Common myeloid progenitor, CD34-positive (primary cell): ENCODE measurements at regions of chr22 and their contacts with region 1.

Region 1: DNA sequence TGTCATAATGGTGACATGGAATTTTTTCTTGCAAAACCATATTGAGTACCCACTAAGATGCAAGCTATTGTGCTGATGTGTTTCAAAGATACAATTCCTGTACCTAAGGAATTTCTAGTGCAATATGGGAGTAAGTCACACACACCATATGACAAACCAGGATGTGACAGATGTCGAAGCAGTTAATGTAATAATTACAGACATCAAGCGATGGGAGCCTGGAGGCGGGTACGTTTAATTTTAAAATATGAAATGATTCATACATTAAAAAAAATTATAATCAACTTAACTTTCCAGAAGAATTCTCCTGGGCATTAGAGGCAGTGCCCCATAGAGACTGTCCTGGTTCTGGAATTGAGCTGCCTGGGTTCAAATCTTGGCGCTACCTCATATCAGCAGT is 6.0 kb downstream of the SYCE3 start:
- DNase-seq: no peak
- H3K4me3 ChIP-seq: no peak overlapping the region
- H3K27ac ChIP-seq: no peak overlapping the region
- H3K4me1 ChIP-seq: no peaks in the 10 kb centered on the region
- H3K27me3 ChIP-seq: peaks cover 0 to 4% (median 0%) of the 10 kb centered on the region in 5 experiments

Region 2: DNA sequence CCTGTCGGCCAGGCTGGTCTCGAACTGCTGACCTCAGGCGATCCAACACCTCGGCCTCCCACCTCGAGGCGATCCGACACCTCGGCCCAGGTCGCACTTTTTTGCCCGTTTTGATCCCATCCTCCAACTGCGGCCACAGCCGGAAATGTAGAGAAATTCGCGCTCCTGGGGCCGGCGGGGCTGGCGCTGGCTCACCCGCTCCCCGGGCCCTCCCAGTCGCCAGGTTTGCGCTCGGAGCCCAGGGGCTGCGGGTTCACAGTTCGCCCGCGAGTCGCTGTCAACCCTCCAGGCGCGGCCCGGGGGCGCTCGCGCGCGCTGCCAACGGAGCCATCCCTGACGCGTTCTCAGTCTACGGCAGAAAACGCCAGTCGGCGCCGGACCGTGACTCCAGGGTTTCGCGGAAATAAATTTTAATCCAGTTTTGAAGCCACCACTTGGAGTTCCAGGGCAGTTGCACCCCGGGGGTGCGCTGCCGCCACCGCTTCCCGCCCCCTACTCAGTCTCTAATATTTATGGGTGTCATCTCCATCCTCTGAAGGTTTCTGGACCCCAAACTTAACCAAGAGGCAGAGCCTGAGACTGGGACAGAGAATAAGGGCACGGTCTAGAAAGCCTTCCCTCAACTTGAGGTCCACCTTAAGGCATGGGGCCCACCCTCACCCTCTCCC is 12.5 kb before region 1 on chr22:
- CTCF ChIA-PET with region 1: interaction called, 13 read pairs
- POLR2A ChIA-PET with region 1: no interaction called
- DNase-seq: peak; percentile 84 to 86 (median 85)
- H3K4me3 ChIP-seq: peak overlapping the region in 5 of 7 experiments; percentile 3 to 57 (median 40)
- H3K27ac ChIP-seq: no peak overlapping the region
- H3K4me1 ChIP-seq: peaks cover 8 to 75% (median 61%) of the 10 kb centered on the region in 4 experiments
- H3K27me3 ChIP-seq: peaks cover 0 to 28% (median 0%) of the 10 kb centered on the region in 5 experiments

Region 3: DNA sequence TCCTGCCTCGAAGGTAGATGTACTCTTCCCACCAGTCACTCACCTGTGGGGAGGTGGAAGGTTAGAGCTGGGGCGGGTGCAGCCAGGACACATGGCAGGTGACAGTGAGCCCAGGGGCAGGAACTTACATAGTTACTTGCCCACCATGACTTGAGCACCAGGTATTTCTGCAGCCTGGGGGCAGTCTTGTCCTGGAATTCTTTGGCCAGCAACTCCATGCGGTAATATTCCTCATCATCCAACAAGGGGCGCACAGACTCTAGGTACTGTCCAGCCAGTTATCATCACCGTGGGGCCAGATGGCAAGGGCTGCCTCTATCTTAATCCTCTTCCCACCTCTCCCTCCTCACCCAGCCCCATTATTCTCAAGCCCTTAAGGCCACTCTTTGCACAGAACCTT is 19.4 kb after region 1 on chr22:
- CTCF ChIA-PET with region 1: interaction called, 11 read pairs
- POLR2A ChIA-PET with region 1: no interaction called
- DNase-seq: peak; percentile 44 to 51 (median 49)
- H3K4me3 ChIP-seq: no peak overlapping the region
- H3K27ac ChIP-seq: no peak overlapping the region
- H3K4me1 ChIP-seq: peaks cover 0 to 17% (median 8%) of the 10 kb centered on the region in 4 experiments
- H3K27me3 ChIP-seq: peaks cover 0 to 3% (median 0%) of the 10 kb centered on the region in 5 experiments

Region 4: DNA sequence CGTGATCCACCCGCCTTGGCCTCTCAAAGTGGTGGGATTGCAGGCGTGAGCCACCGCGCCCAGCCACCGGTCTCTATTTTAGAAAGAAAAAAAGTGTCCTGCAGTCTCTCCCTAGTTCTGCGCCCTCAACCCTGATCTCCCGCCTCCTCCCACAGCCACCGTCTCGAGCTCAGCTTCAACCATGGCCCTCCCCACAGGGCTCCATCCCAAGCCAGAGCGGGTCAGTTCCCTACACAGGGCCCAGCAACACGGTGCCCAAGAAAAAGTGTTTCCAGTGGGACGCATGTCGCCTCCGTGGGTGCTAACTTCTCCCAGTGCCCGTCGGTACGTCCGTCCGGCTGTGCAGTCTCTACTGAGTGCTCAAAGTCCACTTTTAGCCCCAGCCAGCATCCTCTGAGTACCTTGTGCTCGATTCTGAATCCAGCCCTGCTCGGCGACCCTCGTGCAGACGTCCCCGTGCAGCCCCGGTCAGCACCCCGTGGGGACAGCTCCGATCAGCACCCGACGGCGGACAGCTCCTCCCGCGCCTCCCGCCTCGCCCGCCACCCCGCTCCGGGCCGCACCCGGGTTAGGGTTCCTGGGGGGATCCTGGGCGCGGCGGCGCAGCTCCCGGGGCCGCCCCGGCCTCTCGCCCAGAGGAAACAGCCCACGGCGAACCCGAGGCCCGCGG is 43.2 kb after region 1 on chr22:
- CTCF ChIA-PET with region 1: no interaction called
- POLR2A ChIA-PET with region 1: no interaction called
- DNase-seq: peak; percentile 44 to 76 (median 72)
- H3K4me3 ChIP-seq: peak overlapping the region in 2 of 7 experiments; percentile 36 to 54
- H3K27ac ChIP-seq: no peak overlapping the region
- H3K4me1 ChIP-seq: peaks cover 0 to 9% (median 6%) of the 10 kb centered on the region in 4 experiments
- H3K27me3 ChIP-seq: peaks cover 3 to 61% (median 26%) of the 10 kb centered on the region in 5 experiments